ENCODE measurements at regions of chr1 and their contacts with region 1.

Region 1: GRCh38 chr1:178607718-178608408 is 95.0 kb downstream of the TEX35 start:
- DNase-seq: peak; percentile 44
- ATAC-seq: peak; percentile 45
- H3K4me3 Mint-ChIP-seq: peak overlapping the region; percentile 74
- H3K27ac Mint-ChIP-seq: peak overlapping the region; percentile 99
- H3K4me1 Mint-ChIP-seq: peaks cover 92% of the 10 kb centered on the region
- H3K27me3 Mint-ChIP-seq: no peaks in the 10 kb centered on the region
- CTCF ChIP-seq: no peak

Region 2: GRCh38 chr1:178581351-178582303 is 26.2 kb before region 1 on chr1:
- CTCF ChIA-PET with region 1: interaction called, 8 read pairs
- POLR2A ChIA-PET with region 1: interaction called, 394 read pairs
- intact Hi-C with region 1: loop called (anchors 1 kb)
- DNase-seq: peak; percentile 57
- ATAC-seq: peak; percentile 56
- H3K4me3 Mint-ChIP-seq: peak overlapping the region; percentile 66
- H3K27ac Mint-ChIP-seq: peak overlapping the region; percentile 98
- H3K4me1 Mint-ChIP-seq: peaks cover 93% of the 10 kb centered on the region
- H3K27me3 Mint-ChIP-seq: no peaks in the 10 kb centered on the region
- CTCF ChIP-seq: no peak

Region 3: GRCh38 chr1:178619042-178619927 is 11.4 kb after region 1 on chr1:
- CTCF ChIA-PET with region 1: interaction called, 3 read pairs
- POLR2A ChIA-PET with region 1: interaction called, 24 read pairs
- intact Hi-C with region 1: loop called (anchors 1 kb)
- DNase-seq: no peak
- ATAC-seq: peak; percentile 98
- H3K4me3 Mint-ChIP-seq: peak overlapping the region; percentile 67
- H3K27ac Mint-ChIP-seq: peak overlapping the region; percentile 91
- H3K4me1 Mint-ChIP-seq: peaks cover 58% of the 10 kb centered on the region
- H3K27me3 Mint-ChIP-seq: no peaks in the 10 kb centered on the region
- CTCF ChIP-seq: no peak

Region 4: GRCh38 chr1:178664278-178664677 is 56.4 kb after region 1 on chr1:
- CTCF ChIA-PET with region 1: no interaction called
- POLR2A ChIA-PET with region 1: interaction called, 16 read pairs
- intact Hi-C with region 1: loop called (anchors 1 kb)
- DNase-seq: peak; percentile 28
- ATAC-seq: peak; percentile 83
- H3K4me3 Mint-ChIP-seq: peak overlapping the region; percentile 69
- H3K27ac Mint-ChIP-seq: peak overlapping the region; percentile 86
- H3K4me1 Mint-ChIP-seq: peaks cover 91% of the 10 kb centered on the region
- H3K27me3 Mint-ChIP-seq: no peaks in the 10 kb centered on the region
- CTCF ChIP-seq: no peak

Region 5: GRCh38 chr1:178768423-178768822 is 160.6 kb after region 1 on chr1:
- CTCF ChIA-PET with region 1: no interaction called
- POLR2A ChIA-PET with region 1: interaction called, 10 read pairs
- intact Hi-C with region 1: no loop called
- DNase-seq: no peak
- ATAC-seq: peak; percentile 58
- H3K4me3 Mint-ChIP-seq: peak overlapping the region; percentile 32
- H3K27ac Mint-ChIP-seq: peak overlapping the region; percentile 72
- H3K4me1 Mint-ChIP-seq: peaks cover 70% of the 10 kb centered on the region
- H3K27me3 Mint-ChIP-seq: no peaks in the 10 kb centered on the region
- CTCF ChIP-seq: peak; percentile 20

Region 6: DNA sequence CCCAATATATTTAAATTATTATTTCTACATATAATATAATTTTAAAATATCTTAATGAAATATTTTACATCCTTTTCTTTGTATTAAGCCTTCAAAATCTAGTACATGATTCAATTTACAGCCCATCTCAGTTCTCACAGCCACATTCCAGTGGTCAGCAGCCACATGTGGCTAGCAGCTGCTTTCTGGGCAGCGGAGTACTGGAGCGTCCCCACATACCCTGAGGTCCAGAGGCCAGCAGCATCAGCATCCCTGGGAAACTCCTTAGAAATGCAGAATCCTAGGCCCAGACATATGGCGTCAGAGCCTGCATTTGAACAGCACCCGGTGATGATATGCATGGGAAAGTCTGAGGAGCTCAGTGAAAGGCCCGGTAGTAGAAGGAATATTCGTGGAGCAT is 1613.6 kb after region 1 on chr1:
- CTCF ChIA-PET with region 1: no interaction called
- POLR2A ChIA-PET with region 1: no interaction called
- intact Hi-C with region 1: no loop called
- DNase-seq: no peak
- ATAC-seq: no peak
- H3K4me3 Mint-ChIP-seq: no peak overlapping the region
- H3K27ac Mint-ChIP-seq: no peak overlapping the region
- H3K4me1 Mint-ChIP-seq: no peaks in the 10 kb centered on the region
- H3K27me3 Mint-ChIP-seq: peaks cover 34% of the 10 kb centered on the region
- CTCF ChIP-seq: no peak

Measured in activated B cell treated with CpG ODN at 0.5 μM for 24 hours (primary cell).